PC-9 (cell line): ENCODE measurements at regions of chr17 and their contacts with region 1.

Region 1: DNA sequence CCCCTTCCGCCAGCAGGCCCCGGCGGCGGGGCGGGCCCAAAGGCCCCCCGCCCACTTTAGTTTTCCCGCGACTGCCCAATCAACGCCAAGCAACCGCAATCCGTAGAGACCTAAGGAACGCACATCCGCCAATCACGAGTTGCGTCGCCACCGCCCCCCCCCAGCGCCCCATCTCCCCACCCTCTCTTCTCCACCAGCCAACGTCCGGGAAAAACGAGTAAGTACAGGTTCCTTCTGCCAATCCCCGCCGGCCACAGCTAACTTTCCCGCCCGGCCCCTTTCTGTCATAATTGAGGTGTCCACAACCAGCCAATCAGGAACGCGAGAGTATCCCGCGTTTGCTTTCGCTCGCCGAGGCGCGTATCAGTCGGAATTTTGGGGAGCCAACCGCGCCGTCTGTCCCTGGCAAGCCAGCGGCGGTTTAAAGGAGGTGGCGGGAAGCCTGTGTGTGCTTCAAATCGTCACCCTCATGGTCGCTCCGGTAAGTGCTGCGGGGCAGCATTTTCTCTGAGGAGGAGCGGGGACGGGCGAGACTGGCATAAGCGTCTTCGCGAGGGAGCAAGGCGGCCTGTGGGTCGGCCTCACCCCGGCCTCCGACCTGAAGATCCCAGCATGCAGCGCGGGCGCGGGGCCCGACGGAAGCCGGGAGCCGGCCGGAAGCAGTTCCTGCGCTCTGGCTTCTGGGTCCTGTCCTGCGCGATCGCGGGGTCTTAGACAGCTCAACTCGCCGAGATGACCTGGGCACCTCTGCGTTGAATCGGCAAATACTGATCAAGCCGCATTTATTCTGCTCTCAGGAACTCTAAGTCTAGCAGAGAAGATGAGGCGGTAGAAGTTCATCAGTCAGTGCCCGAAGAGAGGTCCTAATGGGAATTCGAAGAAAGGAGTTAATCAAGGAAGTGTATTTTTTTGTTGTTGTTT is at the start of gene MIS12:
- DNase-seq: peak; percentile 97 to 98
- H3K4me3 ChIP-seq: peak within 1 kb of the TSS; percentile 92
- H3K27ac ChIP-seq: peak within 1 kb of the TSS; percentile 91
- H3K4me1 ChIP-seq: peaks cover 16% of the 10 kb centered on the region; the same call in 1 of the 2 replicates
- H3K27me3 ChIP-seq: no peaks in the 10 kb centered on the region
- CTCF ChIP-seq: no peak
- total RNA-seq, gene MIS12: 19.5 and 20.3 TPM in 2 replicates

Region 2: GRCh38 chr17:5281814-5282653 is 204.4 kb before region 1 on chr17 and contains the start of gene RABEP1:
- CTCF ChIA-PET with region 1: no interaction called
- POLR2A ChIA-PET with region 1: no interaction called
- intact Hi-C with region 1: loop called (anchors 5 kb)
- DNase-seq: peak; percentile 53 to 94
- H3K4me3 ChIP-seq: peak within 1 kb of the TSS; percentile 69
- H3K27ac ChIP-seq: no peak within 1 kb of the TSS
- H3K4me1 ChIP-seq: peaks cover 16% of the 10 kb centered on the region
- H3K27me3 ChIP-seq: no peaks in the 10 kb centered on the region
- CTCF ChIP-seq: no peak
- total RNA-seq, gene RABEP1: 41.9 and 53.0 TPM in 2 replicates

Region 3: GRCh38 chr17:5468075-5468473 is 18.4 kb before region 1 on chr17:
- CTCF ChIA-PET with region 1: interaction called, 3 read pairs
- POLR2A ChIA-PET with region 1: interaction called, 10 read pairs
- intact Hi-C with region 1: loop called (anchors 1 kb)
- DNase-seq: no peak
- H3K4me3 ChIP-seq: peak overlapping the region; percentile 84
- H3K27ac ChIP-seq: peak overlapping the region; percentile 16; the same call in 1 of the 2 replicates
- H3K4me1 ChIP-seq: peaks cover 18% of the 10 kb centered on the region
- H3K27me3 ChIP-seq: no peaks in the 10 kb centered on the region
- CTCF ChIP-seq: no peak

Region 4: GRCh38 chr17:6313835-6314234 is 827.4 kb after region 1 on chr17:
- CTCF ChIA-PET with region 1: no interaction called
- POLR2A ChIA-PET with region 1: interaction called, 28 read pairs
- intact Hi-C with region 1: no loop called
- DNase-seq: no peak
- H3K4me3 ChIP-seq: no peak overlapping the region
- H3K27ac ChIP-seq: no peak overlapping the region
- H3K4me1 ChIP-seq: no peaks in the 10 kb centered on the region
- H3K27me3 ChIP-seq: peaks cover 67% of the 10 kb centered on the region
- CTCF ChIP-seq: no peak